Heart left ventricle (tissue), 16 donors: ENCODE measurements at regions of chr20 and their contacts with region 1.

Region 1: DNA sequence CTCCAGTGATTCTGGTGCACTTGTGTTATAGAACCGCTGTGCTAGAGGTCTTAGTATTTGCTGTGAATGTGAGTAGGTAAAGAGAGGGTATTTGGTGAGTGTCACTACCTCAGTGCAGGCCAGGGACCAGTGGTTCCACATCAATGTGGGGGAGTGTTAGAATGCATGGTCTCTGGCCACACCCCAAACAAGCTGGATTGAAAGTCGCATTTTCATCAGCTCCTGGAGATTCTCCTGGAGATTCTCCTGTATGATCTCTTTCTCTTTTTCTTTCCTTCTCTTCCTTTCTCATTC is 26.8 kb upstream of the BCAS1 start:
- DNase-seq: no peak
- ATAC-seq: no peak
- H3K4me3 ChIP-seq: no peak overlapping the region
- H3K27ac ChIP-seq: no peak overlapping the region
- H3K4me1 ChIP-seq: no peaks in the 10 kb centered on the region
- H3K27me3 ChIP-seq: peaks cover 0 to 20% (median 0%) of the 10 kb centered on the region in 9 donors
- CTCF ChIP-seq: no peak
- POLR2A ChIP-seq: no peak

Region 2: GRCh38 chr20:54199721-54200176 is 102.6 kb after region 1 on chr20:
- intact Hi-C with region 1: loop called (anchors 1 to 2 kb)
- DNase-seq: peak; percentile 37 to 75 (median 58)
- ATAC-seq: peak in 3 of 4 donors; percentile 55 to 74 (median 68)
- H3K4me3 ChIP-seq: no peak overlapping the region
- H3K27ac ChIP-seq: no peak overlapping the region
- H3K4me1 ChIP-seq: peaks cover 0 to 4% (median 0%) of the 10 kb centered on the region in 12 donors
- H3K27me3 ChIP-seq: peaks cover 0 to 6% (median 0%) of the 10 kb centered on the region in 9 donors
- CTCF ChIP-seq: peak; percentile 82 to 93 (median 87)
- POLR2A ChIP-seq: no peak